ENCODE measurements at regions of chr16 and their contacts with region 1.

Region 1: GRCh38 chr16:22077700-22078313 is 14.5 kb upstream of the VWA3A start:
- DNase-seq: peak; percentile 43 to 73 (median 69)
- ATAC-seq: peak; percentile 87
- H3K4me3 ChIP-seq: no peak overlapping the region
- H3K4me3 Mint-ChIP-seq: no peak overlapping the region
- H3K27ac ChIP-seq: no peak overlapping the region
- H3K27ac Mint-ChIP-seq: peak overlapping the region in 1 of 9 donors; percentile 41
- H3K4me1 ChIP-seq: no peaks in the 10 kb centered on the region
- H3K4me1 Mint-ChIP-seq: peaks cover 0 to 5% (median 2%) of the 10 kb centered on the region in 7 donors
- H3K27me3 ChIP-seq: no peaks in the 10 kb centered on the region
- H3K27me3 Mint-ChIP-seq: no peaks in the 10 kb centered on the region

Region 2: GRCh38 chr16:21656795-21657768 is 420.7 kb before region 1 on chr16:
- CTCF ChIA-PET with region 1: no interaction called
- POLR2A ChIA-PET with region 1: no interaction called
- intact Hi-C with region 1: loop called in 1 of 2 experiments (anchors 1 kb)
- DNase-seq: peak in 7 of 9 donors; percentile 50 to 71 (median 66)
- ATAC-seq: peak; percentile 72
- H3K4me3 ChIP-seq: no peak overlapping the region
- H3K4me3 Mint-ChIP-seq: peak overlapping the region in 5 of 10 donors; percentile 7 to 48 (median 33)
- H3K27ac ChIP-seq: no peak overlapping the region
- H3K27ac Mint-ChIP-seq: peak overlapping the region in 8 of 9 donors; percentile 5 to 87 (median 26)
- H3K4me1 ChIP-seq: peaks cover 16 to 24% of the 10 kb centered on the region in 2 donors
- H3K4me1 Mint-ChIP-seq: peaks cover 20 to 45% (median 37%) of the 10 kb centered on the region in 7 donors
- H3K27me3 ChIP-seq: no peaks in the 10 kb centered on the region
- H3K27me3 Mint-ChIP-seq: no peaks in the 10 kb centered on the region

Region 3: DNA sequence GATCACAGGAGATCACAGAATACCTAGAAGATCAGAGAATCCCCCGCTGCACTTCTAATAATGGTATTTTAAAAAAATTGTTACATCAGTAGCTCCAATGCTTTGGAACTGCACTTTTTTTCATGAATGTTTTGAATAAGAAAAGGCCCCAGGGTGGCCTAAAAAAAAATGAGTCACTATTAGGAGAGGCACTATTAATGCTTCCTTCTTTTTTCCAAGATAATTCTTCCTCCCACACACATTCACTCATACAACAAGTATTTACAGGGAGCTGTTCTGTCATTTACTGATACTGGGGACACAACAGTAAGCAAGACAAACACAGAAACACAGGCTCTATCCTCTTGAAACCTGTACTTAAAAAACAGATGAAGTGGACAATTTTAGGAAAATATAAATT is 76.2 kb before region 1 on chr16:
- CTCF ChIA-PET with region 1: interaction called, 40 read pairs
- POLR2A ChIA-PET with region 1: interaction called, 3 read pairs
- intact Hi-C with region 1: loop called (anchors 1 kb)
- DNase-seq: no peak
- ATAC-seq: no peak
- H3K4me3 ChIP-seq: no peak overlapping the region
- H3K4me3 Mint-ChIP-seq: peak overlapping the region in 2 of 10 donors; percentile 26 to 59
- H3K27ac ChIP-seq: no peak overlapping the region
- H3K27ac Mint-ChIP-seq: peak overlapping the region in 2 of 9 donors; percentile 13 to 65
- H3K4me1 ChIP-seq: peaks cover 0 to 9% of the 10 kb centered on the region in 2 donors
- H3K4me1 Mint-ChIP-seq: peaks cover 6 to 21% (median 15%) of the 10 kb centered on the region in 7 donors
- H3K27me3 ChIP-seq: no peaks in the 10 kb centered on the region
- H3K27me3 Mint-ChIP-seq: peaks cover 0 to 7% (median 0%) of the 10 kb centered on the region in 5 donors

Region 4: DNA sequence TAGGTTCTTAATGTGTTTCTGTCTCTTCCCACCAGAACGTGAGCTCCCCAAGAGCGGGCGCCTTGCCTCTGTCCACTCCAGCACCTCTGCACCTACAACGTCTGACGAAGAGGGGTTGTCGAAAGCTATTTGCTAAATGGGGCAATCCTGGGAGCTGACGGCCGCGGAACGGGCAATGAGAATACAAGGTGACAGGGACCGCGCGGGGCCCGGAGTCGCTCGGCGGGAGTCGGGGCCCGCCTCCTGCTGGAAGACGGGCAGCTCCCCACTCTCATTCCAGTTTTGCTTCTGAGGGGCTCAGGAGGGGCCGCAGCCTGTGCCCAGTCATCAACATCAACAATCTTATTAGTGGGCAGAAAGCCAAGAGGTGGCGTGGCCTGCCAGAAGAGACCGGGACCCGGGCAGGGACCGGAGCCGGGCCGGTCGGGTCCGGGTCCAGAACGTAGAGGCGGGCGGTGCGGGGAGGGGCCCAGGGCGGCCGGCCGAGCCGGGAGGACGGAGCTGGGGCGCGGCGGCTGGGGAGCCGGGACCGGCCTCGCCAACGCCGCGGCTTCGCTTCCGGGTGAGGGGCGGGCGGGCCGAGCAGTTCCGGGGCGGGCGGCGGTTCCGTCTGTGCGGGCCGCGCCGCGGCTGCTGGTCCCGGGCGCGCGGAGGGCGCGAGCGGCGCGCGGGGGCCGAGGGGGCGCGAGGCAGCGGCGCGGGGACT is 70.1 kb before region 1 on chr16 and contains the start of gene MOSMO:
- CTCF ChIA-PET with region 1: interaction called, 31 read pairs
- POLR2A ChIA-PET with region 1: interaction called, 4 read pairs
- intact Hi-C with region 1: no loop called
- DNase-seq: peak; percentile 38 to 78 (median 59)
- ATAC-seq: peak; percentile 94
- H3K4me3 ChIP-seq: peak within 1 kb of the TSS; percentile 79
- H3K4me3 Mint-ChIP-seq: peak within 1 kb of the TSS; percentile 85 to 92 (median 89)
- H3K27ac ChIP-seq: peak within 1 kb of the TSS; percentile 93
- H3K27ac Mint-ChIP-seq: peak within 1 kb of the TSS; percentile 64 to 91 (median 89)
- H3K4me1 ChIP-seq: peaks cover 8 to 20% of the 10 kb centered on the region in 2 donors
- H3K4me1 Mint-ChIP-seq: peaks cover 19 to 58% (median 51%) of the 10 kb centered on the region in 7 donors
- H3K27me3 ChIP-seq: no peaks in the 10 kb centered on the region
- H3K27me3 Mint-ChIP-seq: peaks cover 0 to 12% (median 0%) of the 10 kb centered on the region in 5 donors
- total RNA-seq, gene MOSMO: 8.5 to 24.0 (median 13.5) TPM

Measured in naive thymus-derived CD4-positive, alpha-beta T cell (primary cell).